ENCODE measurements at regions of chr11 and their contacts with region 1.

Region 1: GRCh38 chr11:85854557-85855340 is 434 bp upstream of the CCDC83 start:
- DNase-seq: peak; percentile 87 to 95 (median 92)
- H3K4me3 ChIP-seq: peak overlapping the region; percentile 12 to 51 (median 35)
- H3K27ac ChIP-seq: peak overlapping the region; percentile 46 to 87 (median 78)
- H3K4me1 ChIP-seq: peaks cover 5 to 6% of the 10 kb centered on the region in 2 donors
- H3K27me3 ChIP-seq: no peaks in the 10 kb centered on the region
- CTCF ChIP-seq: peak; percentile 66 to 99 (median 94)
- POLR2A ChIP-seq: peak in 1 of 2 donors; percentile 74

Region 2: GRCh38 chr11:85595285-85595884 is 259.4 kb before region 1 on chr11:
- intact Hi-C with region 1: loop called in 1 of 2 experiments (anchors 10 kb)
- DNase-seq: no peak
- H3K4me3 ChIP-seq: no peak overlapping the region
- H3K27ac ChIP-seq: no peak overlapping the region
- H3K4me1 ChIP-seq: peaks cover 0 to 8% of the 10 kb centered on the region in 2 donors
- H3K27me3 ChIP-seq: no peaks in the 10 kb centered on the region
- CTCF ChIP-seq: peak; percentile 43 to 78 (median 72)
- POLR2A ChIP-seq: no peak

Region 3: DNA sequence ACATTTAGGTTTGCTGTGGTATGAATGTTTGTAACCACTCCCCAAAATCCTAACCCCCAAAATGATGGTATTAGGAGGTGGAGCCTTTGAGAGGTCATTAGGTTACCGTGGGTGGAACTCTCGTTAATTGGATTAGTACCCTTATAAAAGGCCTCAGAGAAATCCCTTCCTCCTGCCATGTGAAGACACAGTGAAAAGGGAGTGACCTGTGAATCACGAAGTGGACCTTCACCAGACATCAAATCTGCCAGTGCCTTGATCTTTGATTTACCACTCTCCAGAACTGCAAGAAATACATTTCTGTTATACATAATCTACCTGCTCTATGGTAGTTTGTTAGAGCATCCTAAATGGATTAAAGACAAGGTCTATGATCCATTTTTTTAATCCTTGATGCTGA is 226.7 kb after region 1 on chr11:
- intact Hi-C with region 1: no loop called
- DNase-seq: no peak
- H3K4me3 ChIP-seq: no peak overlapping the region
- H3K27ac ChIP-seq: no peak overlapping the region
- H3K4me1 ChIP-seq: no peaks in the 10 kb centered on the region
- H3K27me3 ChIP-seq: no peaks in the 10 kb centered on the region
- CTCF ChIP-seq: no peak
- POLR2A ChIP-seq: no peak

Region 4: GRCh38 chr11:86202013-86202336 is 347.2 kb after region 1 on chr11:
- intact Hi-C with region 1: loop called in 1 of 2 experiments (anchors 10 kb)
- DNase-seq: no peak
- H3K4me3 ChIP-seq: peak overlapping the region in 1 of 4 donors; percentile 41
- H3K27ac ChIP-seq: peak overlapping the region in 2 of 5 donors; percentile 62
- H3K4me1 ChIP-seq: no peaks in the 10 kb centered on the region
- H3K27me3 ChIP-seq: no peaks in the 10 kb centered on the region
- CTCF ChIP-seq: no peak
- POLR2A ChIP-seq: no peak

Region 5: DNA sequence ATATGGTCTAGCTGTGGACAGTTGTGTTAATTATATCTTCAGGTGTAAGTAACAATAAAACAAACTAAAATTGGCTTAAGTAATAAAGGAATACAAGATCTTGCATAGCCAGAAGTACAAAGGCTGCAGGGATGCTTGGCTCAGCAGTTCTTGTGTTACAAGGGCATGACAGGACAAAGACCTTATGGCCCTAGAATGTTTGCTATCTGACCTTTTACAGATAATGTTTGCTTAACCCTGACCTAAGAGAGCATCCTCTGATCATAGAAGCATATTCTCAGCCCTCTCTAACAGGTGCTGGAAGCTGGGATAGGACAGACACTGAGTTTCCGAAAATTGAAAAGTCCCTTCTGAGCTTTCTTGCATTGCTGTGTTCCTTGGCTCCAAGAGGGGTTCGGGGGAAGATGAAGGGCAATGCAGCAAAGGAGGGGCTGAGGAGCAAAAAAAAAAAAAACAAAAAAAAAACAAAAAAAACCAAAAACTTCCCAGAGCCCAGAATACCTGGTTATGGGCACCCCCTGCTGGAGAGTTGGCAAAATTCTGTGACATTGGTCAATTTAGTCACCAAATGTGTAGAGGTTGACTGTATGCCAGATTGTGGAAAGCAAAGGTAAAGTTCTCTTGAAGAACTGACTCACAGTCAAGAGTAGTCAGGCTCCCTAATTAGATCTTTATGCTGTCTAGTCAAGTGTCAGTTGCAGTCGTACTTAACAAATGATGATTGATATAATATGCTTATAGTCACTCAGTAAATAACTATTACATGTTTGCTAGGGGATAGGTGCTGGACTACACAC is 436.9 kb after region 1 on chr11:
- intact Hi-C with region 1: loop called in 1 of 2 experiments (anchors 10 kb)
- DNase-seq: peak; percentile 41 to 79 (median 59)
- H3K4me3 ChIP-seq: no peak overlapping the region
- H3K27ac ChIP-seq: no peak overlapping the region
- H3K4me1 ChIP-seq: peaks cover 0 to 7% of the 10 kb centered on the region in 2 donors
- H3K27me3 ChIP-seq: no peaks in the 10 kb centered on the region
- CTCF ChIP-seq: peak; percentile 36 to 78 (median 61)
- POLR2A ChIP-seq: no peak

Measured in adrenal gland (tissue), 19 donors.